Right ventricle myocardium superior (tissue), 1 donor: ENCODE measurements at regions of chr12 and their contacts with region 1.

Region 1: GRCh38 chr12:67649570-67650387 is 1.2 kb downstream of the DYRK2 start:
- DNase-seq: peak; percentile 62
- ATAC-seq: peak; percentile 58

Region 2: DNA sequence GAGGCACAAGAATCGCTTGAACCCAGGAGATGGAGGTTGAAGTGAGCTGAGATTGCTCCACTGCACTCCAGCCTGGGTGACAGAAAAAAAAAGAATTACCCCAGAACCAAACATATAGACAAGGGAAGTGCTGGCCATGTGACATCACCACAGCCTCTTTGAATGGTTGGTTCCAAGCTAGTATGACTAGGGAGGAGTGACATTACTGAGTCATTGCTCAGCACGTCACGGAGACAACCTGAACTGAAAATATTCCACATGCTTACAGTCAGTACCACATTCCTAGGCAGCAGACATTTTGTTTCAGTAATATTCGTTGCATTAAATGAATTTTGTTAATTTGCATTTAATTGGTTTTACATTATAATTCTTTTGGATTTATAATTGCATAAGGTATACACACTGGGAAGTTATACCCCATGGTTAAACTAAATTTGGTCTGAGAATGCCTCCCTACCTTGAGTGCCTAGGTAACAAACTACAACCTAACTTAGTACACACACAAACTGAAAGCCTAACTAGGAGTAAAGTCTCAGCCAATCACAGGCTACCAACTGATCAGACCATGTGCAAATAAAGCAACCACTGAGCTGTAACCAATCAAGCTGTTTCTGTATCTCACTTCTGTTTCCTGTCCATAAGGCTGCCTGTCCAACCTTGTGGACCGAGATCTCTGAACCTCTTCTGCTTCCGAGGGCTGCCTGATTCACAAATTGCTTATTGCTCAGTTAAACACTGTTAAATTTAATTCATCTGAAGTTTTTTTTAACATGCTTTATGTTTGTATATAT is 216.2 kb before region 1 on chr12:
- intact Hi-C with region 1: loop called (anchors 10 kb)
- DNase-seq: no peak
- ATAC-seq: no peak

Region 3: GRCh38 chr12:67534681-67535080 is 115.1 kb before region 1 on chr12:
- intact Hi-C with region 1: no loop called
- DNase-seq: no peak
- ATAC-seq: peak; percentile 57

Region 4: GRCh38 chr12:67720351-67720856 is 70.6 kb after region 1 on chr12:
- intact Hi-C with region 1: loop called (anchors 5 kb)
- DNase-seq: no peak
- ATAC-seq: peak; percentile 63